Testis (tissue), 5 donors: ENCODE measurements at regions of chr3 and their contacts with region 1.

Region 1: GRCh38 chr3:137013955-137014688 is 56.3 kb downstream of the IL20RB start:
- DNase-seq: peak; percentile 96
- H3K4me3 ChIP-seq: peak overlapping the region; percentile 51 to 54
- H3K27ac ChIP-seq: peak overlapping the region; percentile 75 to 97
- H3K4me1 ChIP-seq: peaks cover 4% of the 10 kb centered on the region
- H3K27me3 ChIP-seq: no peaks in the 10 kb centered on the region
- CTCF ChIP-seq: peak; percentile 97 to 99 (median 98)
- POLR2A ChIP-seq: no peak

Region 2: DNA sequence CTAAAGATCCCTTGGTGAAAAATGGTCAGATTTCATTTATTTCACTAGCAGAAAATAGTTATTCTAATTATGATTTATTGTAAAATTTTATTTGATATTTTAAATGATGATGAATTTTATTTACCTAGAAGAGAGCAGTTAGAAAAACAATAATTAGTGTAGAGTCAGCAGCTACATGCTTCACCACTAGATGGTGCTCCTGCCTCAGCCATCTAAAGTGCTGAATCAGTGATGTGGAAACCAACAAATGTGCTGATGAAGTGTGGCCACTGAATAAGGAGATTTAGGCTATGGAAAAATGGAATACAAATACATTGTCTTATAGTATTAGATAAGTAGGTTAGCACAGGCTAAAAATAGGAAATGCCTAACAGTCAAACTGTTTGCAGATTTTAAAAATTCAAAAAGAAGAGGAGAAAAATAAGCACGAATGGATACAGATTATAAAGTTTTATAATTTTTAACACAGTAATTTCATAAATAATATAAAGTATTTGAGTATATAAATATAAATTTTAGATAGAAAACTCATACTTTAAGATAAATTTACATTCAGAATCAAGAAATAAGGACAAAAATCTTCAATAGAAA is 938.8 kb before region 1 on chr3:
- intact Hi-C with region 1: loop called (anchors 10 kb)
- DNase-seq: peak; percentile 86
- H3K4me3 ChIP-seq: no peak overlapping the region
- H3K27ac ChIP-seq: no peak overlapping the region
- H3K4me1 ChIP-seq: peaks cover 16% of the 10 kb centered on the region
- H3K27me3 ChIP-seq: no peaks in the 10 kb centered on the region
- CTCF ChIP-seq: peak; percentile 92 to 97 (median 96)
- POLR2A ChIP-seq: no peak

Region 3: GRCh38 chr3:136728918-136729317 is 285.2 kb before region 1 on chr3:
- intact Hi-C with region 1: no loop called
- DNase-seq: no peak
- H3K4me3 ChIP-seq: no peak overlapping the region
- H3K27ac ChIP-seq: no peak overlapping the region
- H3K4me1 ChIP-seq: peaks cover 5% of the 10 kb centered on the region
- H3K27me3 ChIP-seq: no peaks in the 10 kb centered on the region
- CTCF ChIP-seq: no peak
- POLR2A ChIP-seq: no peak